Transverse colon (tissue), 4 donors: ENCODE measurements at regions of chr18 and their contacts with region 1.

Region 1: DNA sequence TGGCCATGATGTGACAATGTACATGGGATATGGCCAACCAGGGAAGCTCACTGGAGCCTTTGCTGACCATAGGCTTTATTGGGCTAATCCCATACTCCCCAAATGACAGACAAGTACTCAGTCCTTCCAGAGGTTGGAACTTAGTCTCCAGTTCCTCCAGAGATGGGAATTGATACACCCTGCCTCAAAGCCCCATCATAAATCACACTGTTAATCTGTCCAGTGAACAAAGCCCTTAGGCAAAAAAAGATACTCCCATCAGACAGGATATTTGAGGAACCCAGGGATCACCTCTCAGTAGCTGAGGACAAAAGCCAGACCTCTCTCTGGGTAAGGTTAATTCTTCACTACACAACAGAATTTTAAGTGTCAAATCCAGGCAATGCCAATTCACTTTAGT is 247.5 kb upstream of the CDH20 start:
- DNase-seq: no peak
- H3K4me3 ChIP-seq: no peak overlapping the region
- H3K27ac ChIP-seq: no peak overlapping the region
- H3K4me1 ChIP-seq: no peaks in the 10 kb centered on the region
- H3K27me3 ChIP-seq: no peaks in the 10 kb centered on the region
- CTCF ChIP-seq: no peak
- EP300 ChIP-seq: no peak
- POLR2A ChIP-seq: no peak

Region 2: DNA sequence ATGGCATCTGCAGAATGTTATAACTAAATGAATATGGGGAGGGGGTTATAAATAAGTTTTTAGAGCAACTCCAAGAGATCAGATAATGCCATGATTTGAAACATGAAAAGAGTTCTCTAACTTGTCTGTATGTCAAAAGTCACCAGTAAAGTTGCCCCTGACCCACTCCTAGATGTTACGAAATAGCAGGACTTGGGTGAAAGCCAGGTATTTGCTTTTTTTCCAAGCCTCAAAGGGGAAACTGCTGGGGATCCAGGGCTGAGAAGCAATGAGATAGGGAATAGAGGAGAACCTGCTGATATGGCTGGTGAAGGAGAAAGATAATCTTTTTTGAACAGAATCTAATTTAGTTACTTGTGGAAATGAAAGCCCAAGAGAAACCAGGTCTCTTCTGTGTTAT is 55.9 kb after region 1 on chr18:
- in situ Hi-C with region 1: no loop called
- intact Hi-C with region 1: loop called (anchors 10 kb)
- DNase-seq: no peak
- H3K4me3 ChIP-seq: no peak overlapping the region
- H3K27ac ChIP-seq: no peak overlapping the region
- H3K4me1 ChIP-seq: no peaks in the 10 kb centered on the region
- H3K27me3 ChIP-seq: no peaks in the 10 kb centered on the region
- CTCF ChIP-seq: no peak
- EP300 ChIP-seq: no peak
- POLR2A ChIP-seq: no peak

Region 3: GRCh38 chr18:61475931-61476330 is 390.2 kb after region 1 on chr18:
- in situ Hi-C with region 1: loop called in 2 of 4 experiments (anchors 25 kb)
- intact Hi-C with region 1: no loop called
- DNase-seq: no peak
- H3K4me3 ChIP-seq: no peak overlapping the region
- H3K27ac ChIP-seq: no peak overlapping the region
- H3K4me1 ChIP-seq: no peaks in the 10 kb centered on the region
- H3K27me3 ChIP-seq: peaks cover 16% of the 10 kb centered on the region
- CTCF ChIP-seq: no peak
- EP300 ChIP-seq: no peak
- POLR2A ChIP-seq: no peak

Region 4: GRCh38 chr18:61502472-61502871 is 416.7 kb after region 1 on chr18:
- in situ Hi-C with region 1: loop called in 3 of 4 experiments (anchors 25 kb)
- intact Hi-C with region 1: no loop called
- DNase-seq: peak; percentile 17
- H3K4me3 ChIP-seq: no peak overlapping the region
- H3K27ac ChIP-seq: no peak overlapping the region
- H3K4me1 ChIP-seq: no peaks in the 10 kb centered on the region
- H3K27me3 ChIP-seq: no peaks in the 10 kb centered on the region
- CTCF ChIP-seq: peak; percentile 53 to 68 (median 63)
- EP300 ChIP-seq: no peak
- POLR2A ChIP-seq: no peak